ENCODE measurements at regions of chr2 and their contacts with region 1.

Region 1: GRCh38 chr2:18332477-18332876 is 228.0 kb downstream of the RDH14 start:
- DNase-seq: no peak
- H3K4me3 ChIP-seq: no peak overlapping the region
- H3K27ac ChIP-seq: no peak overlapping the region
- H3K4me1 ChIP-seq: peaks cover 10% of the 10 kb centered on the region
- H3K27me3 ChIP-seq: no peaks in the 10 kb centered on the region
- CTCF ChIP-seq: no peak

Region 2: DNA sequence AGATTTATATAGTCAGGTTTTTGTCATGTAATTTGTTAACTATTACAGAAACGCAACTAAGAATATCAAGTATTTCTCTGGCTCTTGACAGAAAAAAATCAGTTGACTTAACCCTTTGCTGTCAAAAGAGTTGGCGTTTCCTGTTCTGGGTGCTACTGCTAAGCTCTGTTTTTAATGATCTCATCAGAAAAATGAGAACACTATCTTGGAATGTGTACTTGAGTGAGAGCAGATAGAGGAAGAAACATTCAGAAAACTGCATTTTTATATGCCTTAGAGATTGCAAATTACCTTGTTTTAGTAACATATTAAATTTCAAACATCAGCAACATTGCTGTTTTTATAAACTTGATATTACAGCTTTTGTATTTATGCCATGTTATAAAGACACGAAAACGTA is 69.9 kb before region 1 on chr2:
- CTCF ChIA-PET with region 1: no interaction called
- dilution Hi-C with region 1: loop called (anchors 5 kb)
- in situ Hi-C with region 1: no loop called
- intact Hi-C with region 1: no loop called
- DNase-seq: no peak
- H3K4me3 ChIP-seq: no peak overlapping the region
- H3K27ac ChIP-seq: no peak overlapping the region
- H3K4me1 ChIP-seq: no peaks in the 10 kb centered on the region
- H3K27me3 ChIP-seq: no peaks in the 10 kb centered on the region
- CTCF ChIP-seq: no peak

Measured in mammary epithelial cell (primary cell).